ENCODE measurements at regions of chr12 and their contacts with region 1.

Region 1: DNA sequence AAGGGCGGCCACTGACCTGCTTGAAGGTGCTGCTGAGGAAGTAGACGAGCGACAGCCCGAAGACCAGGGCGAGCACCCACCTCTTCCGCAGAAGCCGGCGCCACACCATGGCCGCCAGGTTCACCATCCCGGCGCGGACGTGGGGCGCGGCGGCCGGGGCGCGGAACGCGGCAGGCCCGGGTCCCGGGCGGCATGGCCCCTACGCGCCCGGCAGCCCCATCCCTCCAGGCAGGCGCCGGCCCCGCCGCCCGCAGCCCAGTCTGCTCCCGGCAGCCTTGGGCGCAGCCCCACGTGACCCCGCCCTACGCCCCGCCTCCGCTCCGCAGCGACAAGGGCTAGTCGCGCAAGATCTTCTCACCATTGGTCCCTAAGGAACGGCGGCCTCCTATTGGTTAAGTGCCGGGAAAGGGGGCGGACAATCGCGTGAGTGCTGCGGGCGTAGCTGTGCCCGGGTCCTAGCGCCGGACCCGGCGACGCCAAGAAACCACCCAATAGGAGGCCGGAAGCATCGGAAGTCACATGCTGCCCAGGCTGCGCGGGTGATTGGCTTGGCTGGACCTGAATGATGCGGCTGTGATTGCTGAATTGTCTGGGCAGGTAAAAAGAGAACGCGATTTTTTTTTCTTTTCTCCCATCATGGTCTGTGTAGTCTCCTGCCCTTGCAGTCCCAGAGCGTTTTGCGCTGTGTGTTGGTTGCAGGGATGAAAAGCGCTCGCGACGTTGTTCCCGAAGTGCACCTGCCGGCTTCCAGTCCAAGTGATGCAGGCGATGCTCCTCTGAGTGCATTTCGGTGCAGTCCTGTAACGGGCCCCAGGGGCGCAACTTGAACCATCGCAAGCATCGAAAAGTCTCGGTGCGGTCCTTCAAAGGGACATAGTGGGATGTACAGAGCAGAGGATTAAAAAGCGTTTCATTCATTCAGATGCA is at the starts of genes RNFT2 and SPRING1:
- DNase-seq: peak; percentile 98 to 100 (median 100)

Region 2: DNA sequence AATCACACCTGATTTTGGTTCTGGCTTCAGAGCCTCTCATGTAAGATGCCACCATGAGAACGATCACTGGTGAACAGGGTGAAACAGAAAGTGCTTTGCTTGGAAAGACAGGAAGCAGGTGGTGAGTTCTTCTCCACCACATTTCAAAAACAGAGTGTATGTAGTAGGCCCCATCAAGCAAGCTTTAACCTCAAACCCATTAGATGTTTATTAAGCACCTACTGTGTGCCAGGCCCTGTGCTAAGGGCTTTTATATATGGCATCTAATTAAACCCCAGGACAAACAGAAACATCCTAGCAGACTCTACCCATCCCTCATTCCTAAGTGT is 412.7 kb before region 1 on chr12:
- intact Hi-C with region 1: no loop called
- DNase-seq: no peak

Region 3: GRCh38 chr12:116818948-116819832 is 81.2 kb after region 1 on chr12:
- intact Hi-C with region 1: loop called (anchors 5 kb)
- DNase-seq: peak; percentile 74 to 97 (median 93)

Measured in head of caudate nucleus (tissue), 42 donors.